MCF 10A (cell line): ENCODE measurements at regions of chr14 and their contacts with region 1.

Region 1: DNA sequence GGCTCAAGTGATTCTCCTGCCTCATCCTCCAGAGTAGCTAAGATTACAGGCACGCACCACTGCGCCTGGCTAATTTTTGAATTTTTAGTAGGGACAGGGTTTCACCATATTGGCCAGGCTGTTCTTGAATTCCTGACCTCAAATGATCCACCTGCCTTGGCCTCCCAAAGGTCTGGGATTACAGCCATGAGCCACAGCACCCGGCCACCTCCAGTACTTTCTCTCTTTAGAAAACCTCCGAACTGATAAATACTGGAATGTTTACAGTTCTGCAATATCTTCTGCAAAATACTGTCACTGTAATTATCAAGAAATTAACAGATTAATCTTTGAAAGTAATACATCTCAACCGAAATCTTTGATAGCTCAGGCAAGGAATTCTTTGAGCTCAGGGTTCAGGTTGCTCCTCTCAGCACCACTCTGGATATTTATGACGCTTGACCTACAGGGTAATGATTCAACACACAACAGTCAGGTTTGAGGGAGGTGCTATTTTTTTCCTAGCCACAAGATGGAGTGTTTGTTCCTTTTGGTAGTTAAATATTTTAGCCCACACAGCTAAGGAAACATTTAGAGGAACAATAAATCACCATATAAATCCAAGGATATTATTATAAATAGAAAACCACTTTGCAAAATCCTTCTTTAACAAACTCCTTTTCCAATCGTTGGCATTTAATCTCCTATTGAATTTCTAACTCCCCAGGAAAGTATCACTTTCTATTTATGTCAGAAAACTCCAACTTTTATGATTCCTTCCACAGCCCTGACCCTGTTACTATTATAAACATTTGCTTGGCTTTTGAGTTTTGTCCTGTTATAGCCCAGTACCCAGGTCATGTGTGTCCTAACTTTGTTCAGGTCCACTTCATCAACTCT is 48.6 kb upstream of the GTF2A1 start:
- DNase-seq: peak; percentile 76
- H3K4me3 Mint-ChIP-seq: no peak overlapping the region
- H3K27ac Mint-ChIP-seq: peak overlapping the region; percentile 16
- H3K4me1 Mint-ChIP-seq: peaks cover 20% of the 10 kb centered on the region
- H3K27me3 Mint-ChIP-seq: no peaks in the 10 kb centered on the region
- CTCF ChIP-seq: peak; percentile 76

Region 2: GRCh38 chr14:81220830-81221578 is 48.3 kb before region 1 on chr14 and contains the start of gene GTF2A1:
- CTCF ChIA-PET with region 1: no interaction called
- POLR2A ChIA-PET with region 1: interaction called, 8 read pairs
- intact Hi-C with region 1: loop called (anchors 5 kb)
- DNase-seq: peak; percentile 94
- H3K4me3 Mint-ChIP-seq: peak within 1 kb of the TSS; percentile 93
- H3K27ac Mint-ChIP-seq: peak within 1 kb of the TSS; percentile 99
- H3K4me1 Mint-ChIP-seq: peaks cover 6% of the 10 kb centered on the region
- H3K27me3 Mint-ChIP-seq: no peaks in the 10 kb centered on the region
- CTCF ChIP-seq: no peak
- total RNA-seq, gene GTF2A1: 35.0 and 49.4 TPM in 2 replicates

Region 3: DNA sequence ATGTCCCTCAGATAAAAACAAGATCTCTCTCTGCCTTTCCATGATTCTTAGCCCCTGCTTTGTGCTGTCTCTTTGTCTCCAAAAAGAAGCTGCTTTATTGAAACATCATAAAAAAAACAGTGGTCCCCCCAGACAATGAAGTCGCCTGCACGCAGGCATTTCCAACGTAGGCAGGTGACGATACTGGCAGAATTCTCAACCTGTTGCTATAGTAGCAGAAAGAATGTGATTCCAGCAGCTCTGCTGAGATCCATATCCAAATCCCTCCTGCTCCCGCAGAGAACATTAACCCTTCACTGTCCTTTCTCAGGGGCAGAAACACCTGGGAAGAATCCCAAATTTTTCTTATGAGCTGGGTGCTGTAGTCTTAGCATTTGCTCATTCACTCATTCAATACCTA is 46.0 kb after region 1 on chr14:
- CTCF ChIA-PET with region 1: interaction called, 12 read pairs
- POLR2A ChIA-PET with region 1: no interaction called
- intact Hi-C with region 1: no loop called
- DNase-seq: no peak
- H3K4me3 Mint-ChIP-seq: no peak overlapping the region
- H3K27ac Mint-ChIP-seq: peak overlapping the region; percentile 31
- H3K4me1 Mint-ChIP-seq: peaks cover 33% of the 10 kb centered on the region
- H3K27me3 Mint-ChIP-seq: no peaks in the 10 kb centered on the region
- CTCF ChIP-seq: no peak

Region 4: DNA sequence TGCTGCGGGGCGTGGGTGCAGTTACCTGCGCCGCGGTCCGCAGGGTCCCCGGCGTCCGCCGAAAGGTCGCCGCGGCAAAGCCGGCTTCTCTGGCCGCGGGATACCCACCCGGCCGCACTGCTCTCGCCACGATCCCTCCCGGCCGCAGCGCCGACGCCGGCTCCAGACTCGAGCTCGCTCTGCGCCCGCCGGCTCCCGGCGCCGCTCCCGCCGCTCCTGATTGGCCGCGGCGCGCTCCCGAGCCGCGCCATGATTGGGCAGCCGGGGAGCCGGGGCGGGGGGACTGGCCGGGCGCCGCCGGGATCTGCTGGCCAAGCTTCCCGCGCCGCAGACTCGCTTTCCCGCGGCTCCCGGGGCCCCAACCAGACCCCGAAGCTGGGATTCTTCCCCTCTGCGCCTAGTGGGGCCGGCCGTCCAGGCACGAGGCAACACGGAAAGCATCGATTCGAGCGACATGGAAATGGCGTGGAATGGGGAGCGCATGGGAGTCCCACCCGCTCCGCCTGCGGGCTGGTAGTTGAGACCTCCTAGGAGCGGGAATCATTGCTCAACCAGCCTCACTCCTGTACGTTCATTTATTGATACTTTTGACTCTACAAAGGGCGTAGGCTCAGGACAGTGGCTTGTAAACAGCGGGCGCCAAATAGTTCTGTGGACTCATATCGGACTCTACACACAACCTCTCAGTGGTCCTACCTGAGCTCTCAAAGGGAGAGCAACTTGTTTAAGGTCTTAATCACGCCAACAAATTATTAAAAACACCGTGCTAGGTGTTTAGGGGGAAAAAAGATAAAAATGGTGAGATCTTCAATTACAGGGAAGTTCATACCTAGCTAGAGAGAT is 167.2 kb after region 1 on chr14:
- CTCF ChIA-PET with region 1: interaction called, 37 read pairs
- POLR2A ChIA-PET with region 1: interaction called, 5 read pairs
- intact Hi-C with region 1: no loop called
- DNase-seq: peak; percentile 81
- H3K4me3 Mint-ChIP-seq: peak overlapping the region; percentile 70
- H3K27ac Mint-ChIP-seq: no peak overlapping the region
- H3K4me1 Mint-ChIP-seq: peaks cover 10% of the 10 kb centered on the region
- H3K27me3 Mint-ChIP-seq: no peaks in the 10 kb centered on the region
- CTCF ChIP-seq: no peak

Region 5: DNA sequence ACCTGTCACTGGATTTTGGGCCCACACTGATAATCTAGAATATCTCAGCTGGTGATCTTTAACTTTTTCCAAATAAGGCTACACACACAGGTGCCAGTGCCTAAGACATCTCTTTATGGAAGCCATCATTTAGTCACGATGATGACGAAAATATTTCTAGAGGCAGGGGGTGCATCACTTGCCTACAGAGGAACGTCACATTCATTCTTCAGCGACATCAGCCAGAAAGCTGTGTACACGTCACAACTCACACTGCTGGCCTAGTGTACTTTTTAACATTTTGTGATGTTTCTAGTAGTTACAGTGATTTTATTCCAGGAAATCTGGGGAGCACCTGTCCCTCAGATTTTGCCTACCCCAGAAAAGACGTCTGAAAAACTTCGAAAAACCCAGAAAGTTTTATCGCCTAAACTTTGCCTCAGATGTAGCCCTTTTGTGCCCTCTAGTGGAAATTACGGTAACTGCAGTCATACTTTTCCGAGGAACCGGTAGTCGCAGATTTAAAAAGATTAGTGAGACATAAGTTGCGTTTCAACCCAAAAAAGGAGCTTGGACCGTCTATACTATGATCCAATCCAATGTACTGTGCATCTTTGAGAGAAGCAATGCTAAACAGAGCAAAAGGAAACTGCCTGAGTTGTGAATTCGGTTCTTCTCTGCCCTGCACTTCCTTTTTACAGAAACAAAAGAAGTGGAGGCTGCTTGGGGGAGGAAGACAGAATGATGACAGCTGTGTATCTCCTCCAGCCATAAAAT is 195.1 kb after region 1 on chr14:
- CTCF ChIA-PET with region 1: interaction called, 432 read pairs
- POLR2A ChIA-PET with region 1: interaction called, 4 read pairs
- intact Hi-C with region 1: loop called (anchors 1 kb)
- DNase-seq: peak; percentile 75
- H3K4me3 Mint-ChIP-seq: peak overlapping the region; percentile 40
- H3K27ac Mint-ChIP-seq: no peak overlapping the region
- H3K4me1 Mint-ChIP-seq: no peaks in the 10 kb centered on the region
- H3K27me3 Mint-ChIP-seq: no peaks in the 10 kb centered on the region
- CTCF ChIP-seq: peak; percentile 67